ENCODE measurements at regions of chr10 and their contacts with region 1.

Region 1: GRCh38 chr10:7457478-7458316 is 46.9 kb upstream of the SFMBT2 start:
- DNase-seq: peak; percentile 72
- ATAC-seq: peak; percentile 94
- H3K4me3 ChIP-seq: peak overlapping the region; percentile 7; the same call in 1 of the 2 replicates
- H3K27ac ChIP-seq: peak overlapping the region; percentile 61
- H3K4me1 ChIP-seq: peaks cover 17% of the 10 kb centered on the region
- H3K27me3 ChIP-seq: no peaks in the 10 kb centered on the region
- CTCF ChIP-seq: no peak
- EP300 ChIP-seq: peak; percentile 86 to 89; a peak in 3 of 4 replicates
- POLR2A ChIP-seq: no peak
- RAD21 ChIP-seq: no peak

Region 2: DNA sequence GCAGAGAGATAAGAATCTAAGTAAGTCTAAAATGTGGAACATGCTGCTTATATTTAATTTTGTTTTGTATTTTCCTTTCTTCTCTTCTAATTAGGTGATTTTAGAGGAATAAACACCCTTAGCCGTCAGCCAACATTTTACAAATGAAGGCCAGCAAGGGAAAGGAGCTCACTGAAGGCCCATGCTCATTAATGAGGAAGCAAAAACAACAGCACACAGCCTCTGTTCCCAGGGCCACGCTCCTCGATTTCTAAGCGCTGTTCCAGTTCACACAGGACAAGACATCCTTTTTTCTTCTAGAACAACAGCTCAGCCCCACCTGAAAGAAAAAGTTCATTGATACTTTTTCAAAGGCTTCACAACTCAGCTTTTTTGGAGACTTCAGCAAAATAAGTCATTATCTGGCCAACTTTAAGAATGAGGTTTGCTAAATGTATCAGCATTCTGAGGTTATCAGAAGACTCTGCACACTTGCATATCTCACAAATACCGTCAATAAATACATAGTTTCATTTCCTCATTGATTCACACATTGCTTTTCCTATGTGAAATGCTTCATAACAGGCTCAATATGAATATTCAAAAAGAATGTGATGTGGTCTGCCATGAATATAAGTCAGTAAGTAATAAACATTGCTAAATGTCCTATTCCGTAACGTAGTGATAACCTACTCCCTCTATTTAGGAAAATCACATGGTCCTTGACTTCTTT is 12.1 kb before region 1 on chr10:
- CTCF ChIA-PET with region 1: interaction called, 5 read pairs
- POLR2A ChIA-PET with region 1: interaction called, 3 read pairs
- RAD21 ChIA-PET with region 1: no interaction called
- SMC1A ChIA-PET with region 1: interaction called, 14 read pairs
- in situ Hi-C with region 1: no loop called
- intact Hi-C with region 1: no loop called
- DNase-seq: no peak
- ATAC-seq: peak; percentile 90
- H3K4me3 ChIP-seq: no peak overlapping the region
- H3K27ac ChIP-seq: peak overlapping the region; percentile 85
- H3K4me1 ChIP-seq: peaks cover 21% of the 10 kb centered on the region
- H3K27me3 ChIP-seq: no peaks in the 10 kb centered on the region
- CTCF ChIP-seq: no peak
- EP300 ChIP-seq: peak; percentile 8 to 69; a peak in 3 of 4 replicates
- POLR2A ChIP-seq: no peak
- RAD21 ChIP-seq: no peak

Region 3: GRCh38 chr10:7491949-7492659 is 34.4 kb after region 1 on chr10:
- CTCF ChIA-PET with region 1: no interaction called
- POLR2A ChIA-PET with region 1: interaction called, 4 read pairs
- RAD21 ChIA-PET with region 1: interaction called, 4 read pairs
- SMC1A ChIA-PET with region 1: interaction called, 14 read pairs
- in situ Hi-C with region 1: no loop called
- intact Hi-C with region 1: no loop called
- DNase-seq: peak; percentile 74
- ATAC-seq: peak; percentile 91
- H3K4me3 ChIP-seq: peak overlapping the region; percentile 41; the same call in 1 of the 2 replicates
- H3K27ac ChIP-seq: peak overlapping the region; percentile 80
- H3K4me1 ChIP-seq: peaks cover 37% of the 10 kb centered on the region
- H3K27me3 ChIP-seq: no peaks in the 10 kb centered on the region
- CTCF ChIP-seq: no peak
- EP300 ChIP-seq: 0 out of 4 replicates have a peak, but pooled peaks of 1 of the 2 experiments have one; percentile 57
- POLR2A ChIP-seq: no peak
- RAD21 ChIP-seq: no peak